Right ventricle myocardium inferior (tissue), 1 donor: ENCODE measurements at regions of chr18 and their contacts with region 1.

Region 1: DNA sequence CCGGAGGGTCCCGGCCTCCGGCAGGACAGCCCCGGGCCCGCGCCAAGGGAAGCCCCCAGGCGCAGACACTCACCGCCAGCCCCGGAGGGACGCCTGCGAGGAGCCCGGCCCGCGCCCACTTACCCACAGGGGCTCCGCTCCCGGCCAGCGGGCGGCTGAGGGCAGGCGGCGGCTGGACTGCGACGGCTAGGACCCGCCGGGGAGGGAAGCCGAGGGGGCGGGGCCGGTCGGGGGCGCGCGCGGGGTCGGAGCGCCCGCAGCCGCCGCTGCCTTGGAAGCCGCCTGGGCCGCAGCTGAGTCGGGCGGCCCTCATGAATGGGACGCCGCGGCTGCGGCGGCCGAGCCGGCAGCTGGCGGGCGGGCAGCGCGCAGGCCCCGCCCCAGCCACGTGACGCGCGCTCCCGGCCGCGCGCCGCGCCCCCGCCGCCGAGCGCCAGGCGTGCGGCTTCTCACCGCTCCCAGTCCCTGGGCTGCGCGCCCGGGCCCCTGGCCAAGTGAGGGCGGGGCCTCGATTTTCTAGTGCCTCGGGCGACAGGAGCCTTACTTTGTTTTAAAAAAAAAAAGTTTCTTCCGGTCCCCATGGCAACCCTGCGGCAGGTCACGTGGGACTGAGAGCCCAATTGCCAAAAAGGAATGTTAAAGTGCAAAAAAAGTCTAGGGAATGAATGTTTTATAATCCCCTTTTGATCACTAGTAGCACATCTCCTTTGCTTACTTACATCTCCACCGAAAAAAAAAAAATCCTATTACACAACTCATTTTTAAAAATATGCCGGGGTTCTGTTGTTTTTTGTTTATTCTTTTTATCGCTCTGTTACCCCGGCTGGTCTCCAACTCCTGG is at the start of gene LPIN2:
- DNase-seq: peak; percentile 100
- ATAC-seq: peak; percentile 91
- total RNA-seq, gene LPIN2: 9.9 TPM

Region 2: DNA sequence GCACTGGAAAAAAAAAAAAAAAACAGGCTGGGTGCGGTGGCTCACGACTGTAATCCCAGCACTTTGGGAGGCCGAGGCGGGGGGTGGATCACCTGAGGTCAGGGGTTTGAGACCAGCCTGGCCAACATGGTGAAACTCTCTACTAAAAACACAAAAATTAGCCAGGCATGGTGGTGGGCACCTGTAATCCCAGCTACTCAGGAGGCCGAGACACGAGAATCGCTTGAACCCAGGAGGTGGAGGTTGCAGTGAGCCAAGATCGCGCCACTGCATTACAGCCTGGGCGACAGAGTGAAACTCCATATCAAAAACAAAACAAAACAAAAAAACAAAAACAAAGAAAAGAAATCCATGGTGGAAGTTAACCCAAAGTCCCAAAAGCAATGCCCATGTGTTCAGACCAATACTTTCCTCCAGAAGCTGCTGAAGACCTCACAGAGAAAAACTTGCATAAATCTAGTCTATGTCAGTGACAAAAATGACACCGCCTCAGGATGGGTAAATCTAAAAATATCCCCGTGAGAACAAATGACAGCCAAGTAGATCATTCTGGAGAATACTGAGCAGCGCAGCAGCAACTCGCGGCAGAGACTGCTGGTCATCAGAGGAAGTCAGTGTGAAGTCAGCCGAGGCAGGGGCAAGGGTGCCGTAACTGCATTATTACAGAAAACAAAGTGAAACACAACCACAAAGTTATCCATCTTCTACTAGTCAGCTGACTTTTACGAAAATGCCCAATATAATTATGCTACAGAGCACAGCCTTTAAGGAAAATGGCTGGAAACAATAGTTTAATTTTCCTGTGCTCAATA is 41.2 kb before region 1 on chr18:
- intact Hi-C with region 1: loop called (anchors 2 kb)
- DNase-seq: peak; percentile 79
- ATAC-seq: peak; percentile 68

Region 3: DNA sequence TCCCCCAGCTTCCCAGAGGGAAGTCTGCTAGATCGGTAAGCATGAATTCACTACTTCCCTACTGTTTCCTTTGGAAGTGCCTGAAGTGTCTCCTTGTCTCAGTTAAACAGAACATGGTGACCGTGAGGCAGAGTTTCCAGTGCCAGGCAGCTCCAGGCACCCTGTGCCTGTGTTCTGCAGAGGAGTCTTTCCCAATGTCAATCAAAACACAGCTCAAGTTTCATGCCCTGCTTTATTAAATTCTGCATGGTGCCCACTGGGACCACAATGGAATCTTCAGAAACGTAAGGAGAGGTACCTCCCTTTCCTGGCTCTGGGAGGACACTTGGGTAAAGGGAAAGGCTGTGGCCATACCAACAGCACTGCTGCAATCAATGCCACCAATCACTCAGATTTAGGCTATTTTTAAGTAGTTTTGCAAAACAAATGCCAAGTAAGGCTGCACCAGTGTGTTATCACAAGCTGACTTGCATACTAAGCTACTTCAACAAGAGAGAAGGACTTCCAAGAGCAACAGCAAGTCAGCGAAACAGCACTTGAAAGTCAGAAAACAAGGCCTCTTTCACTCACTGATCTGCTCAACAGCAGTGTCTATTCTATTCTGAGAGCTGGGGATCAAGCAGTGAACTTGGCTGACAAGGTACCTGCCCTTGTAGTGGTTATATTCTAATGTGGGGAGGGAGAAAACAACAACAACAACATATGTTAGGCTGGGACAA is 15.2 kb before region 1 on chr18:
- intact Hi-C with region 1: loop called (anchors 2 kb)
- DNase-seq: no peak
- ATAC-seq: peak; percentile 68

Region 4: GRCh38 chr18:3062798-3063680 is 49.9 kb after region 1 on chr18:
- intact Hi-C with region 1: loop called (anchors 5 kb)
- DNase-seq: peak; percentile 86
- ATAC-seq: peak; percentile 65

Region 5: GRCh38 chr18:3209859-3210569 is 196.8 kb after region 1 on chr18:
- intact Hi-C with region 1: no loop called
- DNase-seq: no peak
- ATAC-seq: no peak